Activated CD4-positive, alpha-beta memory T cell treated with anti-CD3 and anti-CD28 coated beads for 36 hours (primary cell): ENCODE measurements at regions of chr19 and their contacts with region 1.

Region 1: GRCh38 chr19:53867225-53868090 is at the start of gene MYADM:
- DNase-seq: peak; percentile 99
- H3K4me3 Mint-ChIP-seq: peak within 1 kb of the TSS; percentile 93
- H3K27ac Mint-ChIP-seq: peak within 1 kb of the TSS; percentile 89
- H3K4me1 Mint-ChIP-seq: peaks cover 28% of the 10 kb centered on the region
- H3K27me3 Mint-ChIP-seq: no peaks in the 10 kb centered on the region
- total RNA-seq, gene MYADM: 40.3 to 45.5 TPM

Region 2: DNA sequence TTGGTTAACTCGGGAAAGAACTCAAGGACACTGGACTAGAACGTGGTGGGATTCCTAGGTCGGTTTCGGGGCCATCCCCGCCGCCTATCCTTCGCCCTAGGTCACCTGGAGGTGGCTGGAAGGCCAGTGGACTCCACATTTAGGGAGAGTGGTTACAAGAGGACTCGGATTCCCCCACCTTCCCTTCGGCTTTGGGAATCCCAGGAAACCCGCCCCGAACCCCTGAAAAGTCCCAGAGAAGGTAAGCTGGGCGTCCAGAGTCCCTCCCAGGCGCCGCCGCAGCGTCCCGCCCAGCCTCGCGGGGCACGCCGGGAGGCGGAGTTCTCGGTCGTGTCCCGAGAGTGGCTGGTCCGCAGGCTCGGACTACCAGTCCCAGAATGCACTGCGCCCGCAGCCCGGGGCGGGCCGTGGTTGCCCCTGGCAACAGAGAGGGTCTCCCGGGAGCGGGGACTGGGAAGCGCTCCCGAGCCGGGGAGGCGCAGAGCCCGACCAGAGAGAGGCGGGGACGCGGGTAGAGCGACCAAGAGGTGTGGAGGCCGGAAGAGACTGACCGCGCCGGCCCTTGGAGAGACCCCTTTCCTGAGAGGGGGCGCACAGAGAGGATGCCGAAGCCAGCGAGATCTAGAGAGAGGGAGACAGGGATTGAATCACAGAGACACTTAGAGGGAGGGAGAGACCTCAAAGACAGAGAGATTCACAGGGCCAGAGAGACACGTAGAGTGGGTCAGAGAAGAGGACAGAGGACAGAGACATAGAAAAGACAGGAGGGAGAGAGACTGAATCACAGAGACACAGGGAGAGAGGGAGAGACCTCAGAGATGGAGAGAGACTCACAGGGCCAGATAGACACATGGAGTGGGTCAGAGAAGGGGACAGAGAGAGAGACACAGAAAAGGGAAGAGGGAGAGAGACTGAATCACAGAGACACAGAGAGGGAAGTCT is 12.0 kb after region 1 on chr19:
- CTCF ChIA-PET with region 1: interaction called, 6 read pairs
- POLR2A ChIA-PET with region 1: interaction called, 7 read pairs
- intact Hi-C with region 1: loop called (anchors 1 kb)
- DNase-seq: peak; percentile 87
- H3K4me3 Mint-ChIP-seq: no peak overlapping the region
- H3K27ac Mint-ChIP-seq: no peak overlapping the region
- H3K4me1 Mint-ChIP-seq: peaks cover 37% of the 10 kb centered on the region
- H3K27me3 Mint-ChIP-seq: peaks cover 13% of the 10 kb centered on the region

Region 3: DNA sequence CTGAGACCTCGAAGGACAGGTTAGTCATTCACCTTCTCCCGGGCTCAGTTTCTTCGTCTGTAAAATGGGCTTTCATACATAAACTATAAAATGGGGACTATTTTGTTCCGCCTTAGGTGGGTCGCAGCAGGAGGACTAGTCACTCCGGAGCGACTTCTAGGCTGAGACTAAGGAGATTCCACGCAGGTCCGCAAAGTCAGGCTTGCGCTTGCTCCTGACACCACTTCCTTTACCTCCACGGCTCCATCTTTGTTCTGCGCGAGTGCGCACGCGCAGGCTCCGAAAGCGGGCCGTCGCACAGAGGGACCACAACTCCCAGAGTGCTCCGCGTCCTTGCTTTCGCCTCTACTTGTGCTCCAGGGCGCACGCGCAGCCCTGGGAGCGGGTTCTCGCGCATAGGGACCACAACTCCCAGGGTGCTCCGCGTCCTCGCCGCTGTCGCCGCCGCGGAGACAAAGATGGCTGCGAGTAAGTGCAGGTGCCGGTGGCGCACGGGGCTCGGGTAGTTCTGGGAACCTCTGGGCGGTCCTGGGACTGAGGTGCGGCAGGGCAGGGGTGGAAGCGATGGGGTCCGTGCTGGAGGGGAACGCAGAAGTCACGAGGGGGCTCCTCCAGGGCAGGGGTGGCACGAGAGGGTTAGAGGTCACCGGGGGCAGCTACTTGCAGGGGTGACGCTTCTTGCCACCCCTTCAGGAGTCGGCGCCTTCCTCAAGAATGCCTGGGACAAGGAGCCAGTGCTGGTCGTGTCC is 235.1 kb after region 1 on chr19 and contains the start of gene NDUFA3:
- CTCF ChIA-PET with region 1: no interaction called
- POLR2A ChIA-PET with region 1: no interaction called
- intact Hi-C with region 1: loop called (anchors 2 kb)
- DNase-seq: peak; percentile 99
- H3K4me3 Mint-ChIP-seq: peak within 1 kb of the TSS; percentile 99
- H3K27ac Mint-ChIP-seq: peak within 1 kb of the TSS; percentile 89
- H3K4me1 Mint-ChIP-seq: peaks cover 13% of the 10 kb centered on the region
- H3K27me3 Mint-ChIP-seq: no peaks in the 10 kb centered on the region
- total RNA-seq, gene NDUFA3: 106 to 113 TPM

Region 4: GRCh38 chr19:54137086-54137921 is 269.8 kb after region 1 on chr19 and contains the start of gene CNOT3:
- CTCF ChIA-PET with region 1: no interaction called
- POLR2A ChIA-PET with region 1: interaction called, 7 read pairs
- intact Hi-C with region 1: loop called (anchors 1 kb)
- DNase-seq: peak; percentile 100
- H3K4me3 Mint-ChIP-seq: peak within 1 kb of the TSS; percentile 86
- H3K27ac Mint-ChIP-seq: peak within 1 kb of the TSS; percentile 87
- H3K4me1 Mint-ChIP-seq: peaks cover 52% of the 10 kb centered on the region
- H3K27me3 Mint-ChIP-seq: no peaks in the 10 kb centered on the region
- total RNA-seq, gene CNOT3: 54.6 to 58.7 TPM

Region 5: GRCh38 chr19:54463531-54464043 is 596.1 kb after region 1 on chr19 and contains the start of gene LENG9:
- CTCF ChIA-PET with region 1: no interaction called
- POLR2A ChIA-PET with region 1: no interaction called
- intact Hi-C with region 1: loop called (anchors 2 kb)
- DNase-seq: peak; percentile 99
- H3K4me3 Mint-ChIP-seq: peak within 1 kb of the TSS; percentile 78
- H3K27ac Mint-ChIP-seq: peak within 1 kb of the TSS; percentile 92
- H3K4me1 Mint-ChIP-seq: peaks cover 29% of the 10 kb centered on the region
- H3K27me3 Mint-ChIP-seq: no peaks in the 10 kb centered on the region
- total RNA-seq, gene LENG9: 5.3 to 5.6 TPM

Region 6: DNA sequence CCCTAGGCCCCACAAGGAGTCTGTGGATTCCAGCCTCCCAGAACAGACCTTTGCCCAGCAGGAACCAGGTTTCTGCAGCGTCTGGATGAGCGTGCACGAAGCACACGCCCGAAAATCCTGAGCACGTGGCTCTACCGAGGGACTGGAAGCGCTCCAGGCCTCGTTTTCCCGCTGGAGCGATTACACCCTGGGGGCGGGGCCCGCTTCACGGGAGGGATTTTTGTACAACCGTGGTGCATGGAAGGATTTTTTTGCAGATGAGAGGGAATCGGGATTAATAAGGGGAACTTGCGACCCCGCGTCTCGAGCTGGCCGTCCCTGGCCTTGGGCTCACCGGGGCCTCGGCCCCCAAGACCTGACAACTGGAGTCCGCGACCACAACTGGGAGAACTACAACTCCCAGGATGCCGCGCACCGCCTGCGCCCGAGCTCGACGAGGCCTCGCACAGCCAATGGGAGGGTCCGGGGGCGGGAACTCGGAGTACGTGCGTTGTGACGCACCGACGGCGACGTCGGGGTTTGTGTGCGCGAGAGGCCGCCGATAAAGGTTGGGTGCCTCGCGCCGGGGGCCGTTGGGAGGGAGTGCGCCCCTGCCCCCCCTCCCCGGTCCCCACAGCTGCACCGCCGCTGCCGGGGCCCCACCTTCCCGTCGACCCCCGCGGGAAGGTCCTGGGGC is 1608.8 kb after region 1 on chr19 and contains the start of gene ZNF628:
- CTCF ChIA-PET with region 1: no interaction called
- POLR2A ChIA-PET with region 1: no interaction called
- intact Hi-C with region 1: loop called (anchors 2 kb)
- DNase-seq: peak; percentile 99
- H3K4me3 Mint-ChIP-seq: peak within 1 kb of the TSS; percentile 88
- H3K27ac Mint-ChIP-seq: peak within 1 kb of the TSS; percentile 91
- H3K4me1 Mint-ChIP-seq: peaks cover 19% of the 10 kb centered on the region
- H3K27me3 Mint-ChIP-seq: no peaks in the 10 kb centered on the region
- total RNA-seq, gene ZNF628: 5.8 to 6.9 TPM